ENCODE measurements at regions of chr2 and their contacts with region 1.

Region 1: GRCh38 chr2:27095745-27096651 is 9.4 kb downstream of the KHK start:
- DNase-seq: no peak
- H3K4me3 ChIP-seq: peak overlapping the region; percentile 6 to 44 (median 34)
- H3K27ac ChIP-seq: peak overlapping the region in 1 of 4 donors; percentile 25
- H3K4me1 ChIP-seq: peaks cover 0 to 12% (median 6%) of the 10 kb centered on the region in 4 donors
- H3K27me3 ChIP-seq: no peaks in the 10 kb centered on the region
- CTCF ChIP-seq: no peak
- EP300 ChIP-seq: no peak
- POLR2A ChIP-seq: no peak

Region 2: GRCh38 chr2:27191053-27191829 is 95.2 kb after region 1 on chr2:
- intact Hi-C with region 1: loop called (anchors 2 kb)
- DNase-seq: no peak
- H3K4me3 ChIP-seq: no peak overlapping the region
- H3K27ac ChIP-seq: no peak overlapping the region
- H3K4me1 ChIP-seq: no peaks in the 10 kb centered on the region
- H3K27me3 ChIP-seq: no peaks in the 10 kb centered on the region
- CTCF ChIP-seq: peak in 3 of 4 experiments; percentile 11 to 51 (median 25)
- EP300 ChIP-seq: no peak
- POLR2A ChIP-seq: no peak